Activated CD8-positive, alpha-beta T cell treated with anti-CD3 and anti-CD28 coated beads, Interleukin-2, amount 10 ng/mL, durations not matched to agents 7 days and 5 days (primary cell): ENCODE measurements at regions of chr13 and their contacts with region 1.

Region 1: GRCh38 chr13:75876360-75877050 is 240.4 kb downstream of the LMO7 start:
- DNase-seq: peak; percentile 75
- ATAC-seq: peak; percentile 97
- H3K4me3 Mint-ChIP-seq: peak overlapping the region; percentile 4
- H3K27ac Mint-ChIP-seq: no peak overlapping the region
- H3K4me1 Mint-ChIP-seq: peaks cover 19% of the 10 kb centered on the region
- H3K27me3 Mint-ChIP-seq: peaks cover 11% of the 10 kb centered on the region

Region 2: GRCh38 chr13:76016799-76017400 is 140.4 kb after region 1 on chr13:
- CTCF ChIA-PET with region 1: interaction called, 12 read pairs
- POLR2A ChIA-PET with region 1: no interaction called
- DNase-seq: peak; percentile 39
- ATAC-seq: no peak
- H3K4me3 Mint-ChIP-seq: no peak overlapping the region
- H3K27ac Mint-ChIP-seq: no peak overlapping the region
- H3K4me1 Mint-ChIP-seq: no peaks in the 10 kb centered on the region
- H3K27me3 Mint-ChIP-seq: no peaks in the 10 kb centered on the region

Region 3: DNA sequence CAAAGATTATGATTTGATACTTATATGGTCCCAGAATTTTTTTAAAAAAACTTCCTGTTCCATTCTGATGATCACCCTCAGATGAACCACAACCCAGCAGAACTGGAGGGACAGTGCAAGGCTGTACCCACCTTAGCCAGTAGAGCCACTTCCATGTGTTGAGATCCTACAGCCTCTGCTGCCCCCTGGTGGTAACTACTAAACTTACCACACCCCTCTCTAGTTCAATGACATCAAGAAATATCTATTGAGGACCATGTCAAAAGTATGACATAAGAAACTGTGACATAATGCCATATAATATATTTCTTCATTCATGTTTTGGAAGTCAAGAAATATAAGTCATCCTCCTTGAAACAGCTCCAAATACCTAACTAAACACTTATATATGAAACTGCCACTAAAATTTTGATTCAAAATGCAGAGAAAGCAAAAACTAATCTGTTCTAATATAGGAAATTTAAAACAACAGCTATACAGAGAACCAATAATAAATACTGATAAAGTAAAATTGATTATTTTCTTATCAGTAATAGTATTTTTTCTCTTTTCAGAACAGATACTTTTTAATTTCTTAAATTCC is 597.1 kb after region 1 on chr13:
- CTCF ChIA-PET with region 1: interaction called, 10 read pairs
- POLR2A ChIA-PET with region 1: no interaction called
- DNase-seq: peak; percentile 84
- ATAC-seq: peak; percentile 97
- H3K4me3 Mint-ChIP-seq: no peak overlapping the region
- H3K27ac Mint-ChIP-seq: no peak overlapping the region
- H3K4me1 Mint-ChIP-seq: no peaks in the 10 kb centered on the region
- H3K27me3 Mint-ChIP-seq: peaks cover 5% of the 10 kb centered on the region